ENCODE measurements at regions of chr3 and their contacts with region 1.

Region 1: GRCh38 chr3:42547401-42547945 is 34.3 kb downstream of the SEC22C start:
- DNase-seq: peak; percentile 72
- ATAC-seq: peak; percentile 78
- H3K4me3 Mint-ChIP-seq: no peak overlapping the region
- H3K27ac Mint-ChIP-seq: no peak overlapping the region
- H3K4me1 Mint-ChIP-seq: peaks cover 3% of the 10 kb centered on the region
- H3K27me3 Mint-ChIP-seq: no peaks in the 10 kb centered on the region
- CTCF ChIP-seq: peak; percentile 97

Region 2: GRCh38 chr3:42419563-42419962 is 127.9 kb before region 1 on chr3:
- CTCF ChIA-PET with region 1: no interaction called
- POLR2A ChIA-PET with region 1: no interaction called
- intact Hi-C with region 1: no loop called
- DNase-seq: no peak
- ATAC-seq: no peak
- H3K4me3 Mint-ChIP-seq: no peak overlapping the region
- H3K27ac Mint-ChIP-seq: no peak overlapping the region
- H3K4me1 Mint-ChIP-seq: no peaks in the 10 kb centered on the region
- H3K27me3 Mint-ChIP-seq: peaks cover 2% of the 10 kb centered on the region
- CTCF ChIP-seq: no peak

Region 3: DNA sequence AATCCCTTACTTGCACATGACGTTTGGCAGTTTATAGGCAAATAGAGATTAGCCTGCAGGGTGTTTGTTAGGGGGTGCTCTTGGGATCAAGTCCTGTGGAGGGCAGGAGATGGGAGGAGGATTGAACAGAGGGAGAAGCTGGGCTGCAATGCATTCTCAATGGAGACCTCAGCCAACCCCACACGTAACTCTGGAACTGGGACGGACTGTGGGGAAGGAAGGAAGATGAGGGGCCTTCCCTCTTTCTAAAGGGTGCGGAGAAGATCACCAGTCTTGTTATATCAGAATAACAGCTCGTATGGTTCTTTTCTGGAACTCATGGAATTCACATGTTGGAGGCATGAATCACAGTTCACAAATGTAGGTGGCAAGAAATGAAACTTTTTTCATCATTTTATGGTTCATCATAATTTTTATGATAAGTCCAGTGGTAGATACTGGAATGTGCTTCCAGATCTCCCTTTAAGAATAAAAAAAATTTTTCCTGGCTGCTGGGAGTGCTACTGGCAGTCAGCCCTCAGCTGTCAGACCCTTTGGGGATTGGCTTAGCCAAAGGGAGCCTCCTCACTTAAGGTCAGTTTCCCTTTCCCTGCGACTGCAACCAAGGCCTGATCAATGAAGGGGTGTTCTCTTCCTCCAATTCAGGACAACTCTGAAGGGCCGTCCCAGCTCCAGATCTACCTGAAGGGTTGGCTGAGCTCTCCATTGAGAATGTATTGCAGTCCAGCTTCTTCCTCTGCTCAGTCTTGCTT is 116.5 kb before region 1 on chr3:
- CTCF ChIA-PET with region 1: no interaction called
- POLR2A ChIA-PET with region 1: no interaction called
- intact Hi-C with region 1: no loop called
- DNase-seq: no peak
- ATAC-seq: no peak
- H3K4me3 Mint-ChIP-seq: no peak overlapping the region
- H3K27ac Mint-ChIP-seq: no peak overlapping the region
- H3K4me1 Mint-ChIP-seq: no peaks in the 10 kb centered on the region
- H3K27me3 Mint-ChIP-seq: peaks cover 22% of the 10 kb centered on the region
- CTCF ChIP-seq: no peak

Region 4: GRCh38 chr3:42518800-42519567 is 28.5 kb before region 1 on chr3:
- CTCF ChIA-PET with region 1: interaction called, 10 read pairs
- POLR2A ChIA-PET with region 1: no interaction called
- intact Hi-C with region 1: no loop called
- DNase-seq: peak; percentile 74
- ATAC-seq: peak; percentile 19
- H3K4me3 Mint-ChIP-seq: no peak overlapping the region
- H3K27ac Mint-ChIP-seq: peak overlapping the region; percentile 78
- H3K4me1 Mint-ChIP-seq: peaks cover 16% of the 10 kb centered on the region
- H3K27me3 Mint-ChIP-seq: no peaks in the 10 kb centered on the region
- CTCF ChIP-seq: peak; percentile 48

Region 5: DNA sequence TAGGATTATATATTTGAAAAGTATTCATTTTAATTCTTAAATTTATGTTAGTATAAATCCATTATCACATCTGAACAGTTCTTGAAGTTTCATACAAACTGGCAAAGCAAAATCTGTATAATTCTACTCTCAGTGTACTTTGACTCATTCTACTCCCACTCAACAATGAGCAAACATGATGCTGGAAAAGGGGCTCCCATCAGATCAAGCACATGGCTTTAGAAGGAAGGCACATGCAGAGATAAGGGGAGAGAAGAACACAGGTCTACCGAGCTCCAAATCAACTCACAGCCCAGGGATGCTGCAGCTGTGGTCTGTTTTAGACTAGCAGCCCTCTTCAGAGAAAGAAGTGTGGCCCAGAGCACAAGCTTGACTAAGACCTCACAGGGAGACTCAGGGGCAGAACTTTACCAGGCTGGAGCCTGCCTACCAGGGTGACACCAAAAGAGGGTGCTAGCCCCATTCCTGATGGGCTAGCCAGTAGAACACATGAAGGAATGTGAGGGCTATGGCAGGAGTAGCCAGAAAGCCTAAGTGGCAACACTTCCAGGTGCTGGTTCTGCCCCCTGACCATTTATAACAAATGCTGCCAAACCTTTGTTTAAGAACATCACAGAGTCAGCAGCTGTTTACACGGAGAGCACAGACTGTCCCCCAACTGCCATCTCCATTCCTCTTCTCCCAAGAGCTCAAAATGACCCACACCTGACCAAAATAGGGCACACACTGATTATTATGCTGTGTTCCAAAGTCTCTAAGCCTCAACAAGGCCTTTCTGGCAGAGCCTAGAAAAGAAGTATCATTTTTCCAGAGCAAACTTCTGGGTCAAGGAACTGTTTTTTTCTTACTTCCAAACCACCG is 14.8 kb after region 1 on chr3:
- CTCF ChIA-PET with region 1: interaction called, 16 read pairs
- POLR2A ChIA-PET with region 1: interaction called, 3 read pairs
- intact Hi-C with region 1: no loop called
- DNase-seq: no peak
- ATAC-seq: no peak
- H3K4me3 Mint-ChIP-seq: no peak overlapping the region
- H3K27ac Mint-ChIP-seq: peak overlapping the region; percentile 78
- H3K4me1 Mint-ChIP-seq: peaks cover 10% of the 10 kb centered on the region
- H3K27me3 Mint-ChIP-seq: no peaks in the 10 kb centered on the region
- CTCF ChIP-seq: no peak

Region 6: DNA sequence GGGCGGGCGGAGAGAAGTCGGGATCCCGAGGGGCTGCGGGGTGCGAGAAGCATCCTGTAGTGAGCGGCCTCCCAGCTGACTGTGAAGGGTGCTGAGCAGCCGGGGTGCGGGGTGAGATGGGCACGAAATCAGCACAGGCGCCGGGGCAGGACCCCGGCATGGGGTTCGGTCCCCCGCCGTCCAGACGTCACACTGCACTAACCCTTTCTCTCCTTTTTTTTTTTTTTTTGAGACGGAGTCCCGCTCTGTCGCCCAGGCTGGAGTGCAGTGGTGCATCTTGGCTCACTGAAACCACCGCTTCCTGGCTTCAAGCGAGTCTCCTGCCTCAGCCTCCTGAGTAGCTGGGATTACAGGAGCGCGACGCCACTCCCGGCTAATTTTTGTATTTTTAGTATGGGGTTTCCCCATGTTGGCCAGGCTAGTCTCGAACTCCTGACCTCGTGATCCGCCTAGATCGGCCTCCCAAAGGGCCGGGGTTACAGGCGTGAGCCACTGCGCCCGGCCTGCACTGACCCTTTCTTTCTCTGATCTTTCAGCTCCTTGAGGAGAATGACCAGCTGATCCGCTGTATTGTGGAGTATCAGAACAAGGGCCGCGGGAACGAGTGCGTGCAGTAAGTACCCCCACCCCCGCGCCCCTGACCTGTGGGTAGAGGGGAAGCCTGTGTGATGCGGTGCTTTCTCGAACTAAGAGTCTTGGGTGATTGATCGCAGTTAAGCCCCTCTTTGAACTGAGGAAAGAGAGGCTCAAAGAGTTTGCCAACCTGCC is 43.7 kb after region 1 on chr3:
- CTCF ChIA-PET with region 1: no interaction called
- POLR2A ChIA-PET with region 1: no interaction called
- intact Hi-C with region 1: no loop called
- DNase-seq: peak; percentile 29
- ATAC-seq: no peak
- H3K4me3 Mint-ChIP-seq: peak overlapping the region; percentile 91
- H3K27ac Mint-ChIP-seq: peak overlapping the region; percentile 97
- H3K4me1 Mint-ChIP-seq: peaks cover 35% of the 10 kb centered on the region
- H3K27me3 Mint-ChIP-seq: no peaks in the 10 kb centered on the region
- CTCF ChIP-seq: no peak